Esophagus muscularis mucosa (tissue), 4 donors: ENCODE measurements at regions of chr14 and their contacts with region 1.

Region 1: DNA sequence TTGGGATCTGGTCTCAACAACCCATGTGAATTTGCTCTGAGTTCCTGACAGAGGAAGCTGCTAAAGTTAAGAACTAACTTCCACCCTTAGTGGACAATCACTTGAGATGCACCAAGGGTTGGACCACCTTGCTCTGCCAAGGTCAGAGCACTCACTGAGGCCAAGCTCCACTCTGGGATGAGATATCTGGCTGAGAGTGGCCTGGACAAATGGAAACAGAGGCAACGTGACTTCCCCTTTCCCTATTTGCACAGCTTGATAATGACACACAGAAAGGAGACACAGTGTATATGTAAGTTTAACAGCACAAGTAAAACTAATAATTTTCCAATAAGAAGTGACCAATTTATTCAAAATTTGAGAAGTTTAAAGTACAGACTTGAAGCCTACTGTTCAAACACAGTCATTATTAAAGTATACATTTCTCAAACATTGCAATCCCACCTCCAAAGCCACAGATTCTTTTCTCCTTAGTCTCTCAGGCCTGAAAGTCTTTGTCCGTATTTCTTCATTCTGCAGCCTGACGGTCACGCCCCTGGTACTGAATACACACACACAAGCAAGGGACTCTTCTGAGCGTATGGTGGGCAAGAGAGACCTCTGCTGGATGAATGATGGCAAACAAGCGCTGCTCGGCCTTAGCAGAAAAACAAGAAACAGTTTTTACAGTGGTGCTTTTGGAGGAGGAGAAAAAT is 28.6 kb downstream of the TMEM30B start:
- DNase-seq: peak; percentile 95
- H3K4me3 ChIP-seq: no peak overlapping the region
- H3K27ac ChIP-seq: no peak overlapping the region
- H3K4me1 ChIP-seq: peaks cover 0 to 12% (median 0%) of the 10 kb centered on the region in 4 donors
- H3K27me3 ChIP-seq: no peaks in the 10 kb centered on the region
- CTCF ChIP-seq: peak; percentile 77 to 83 (median 78)
- EP300 ChIP-seq: no peak
- POLR2A ChIP-seq: no peak

Region 2: DNA sequence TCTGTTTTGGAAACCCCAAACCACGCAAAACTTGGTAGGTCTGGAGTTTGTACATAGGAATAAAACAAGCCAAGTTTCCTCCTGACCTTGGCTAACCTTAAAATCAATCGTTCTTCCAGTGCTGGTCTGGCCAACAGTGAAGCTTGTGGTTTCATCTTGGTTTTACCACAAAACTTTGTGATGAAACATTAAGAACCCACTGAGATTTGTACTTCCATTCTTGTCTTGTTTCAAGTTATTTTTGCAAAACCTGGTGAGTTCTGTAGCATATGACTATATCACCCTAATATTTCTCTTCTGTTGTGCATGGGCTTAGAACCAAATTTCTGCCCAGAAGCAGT is 629.6 kb before region 1 on chr14:
- intact Hi-C with region 1: loop called (anchors 2 kb)
- DNase-seq: no peak
- H3K4me3 ChIP-seq: no peak overlapping the region
- H3K27ac ChIP-seq: no peak overlapping the region
- H3K4me1 ChIP-seq: peaks cover 0 to 4% (median 0%) of the 10 kb centered on the region in 4 donors
- H3K27me3 ChIP-seq: peaks cover 0 to 8% (median 0%) of the 10 kb centered on the region in 4 donors
- CTCF ChIP-seq: no peak
- EP300 ChIP-seq: no peak
- POLR2A ChIP-seq: no peak

Region 3: GRCh38 chr14:61218767-61219166 is 33.7 kb before region 1 on chr14:
- intact Hi-C with region 1: no loop called
- DNase-seq: no peak
- H3K4me3 ChIP-seq: no peak overlapping the region
- H3K27ac ChIP-seq: no peak overlapping the region
- H3K4me1 ChIP-seq: peaks cover 0 to 14% (median 0%) of the 10 kb centered on the region in 4 donors
- H3K27me3 ChIP-seq: no peaks in the 10 kb centered on the region
- CTCF ChIP-seq: no peak
- EP300 ChIP-seq: no peak
- POLR2A ChIP-seq: no peak